Naive thymus-derived CD8-positive, alpha-beta T cell (primary cell): ENCODE measurements at regions of chr20 and their contacts with region 1.

Region 1: DNA sequence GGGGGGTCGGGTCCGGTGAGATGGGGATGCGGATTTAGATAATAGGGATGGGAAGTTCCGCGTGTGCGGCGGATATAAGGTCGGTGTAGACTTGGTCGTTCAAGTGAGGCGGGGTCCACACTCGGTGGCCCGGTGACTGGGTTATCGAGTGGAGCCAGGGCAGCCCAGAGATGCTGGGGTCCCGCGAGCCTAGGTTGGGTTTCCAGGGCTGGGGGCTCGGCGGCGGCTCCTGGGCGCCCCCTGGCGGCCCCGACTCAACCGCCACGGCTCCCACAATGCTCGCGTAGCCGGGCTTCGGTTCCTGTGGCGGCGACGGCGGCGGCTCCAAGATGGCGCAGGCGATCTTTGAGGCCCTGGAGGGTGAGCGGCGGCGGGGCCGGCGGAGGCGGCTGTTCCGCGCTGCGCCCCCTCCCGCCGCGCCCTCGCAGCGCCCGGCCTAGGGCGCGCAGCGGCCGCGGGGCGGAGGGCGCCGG is at the start of gene ZNF341:
- DNase-seq: peak; percentile 81 to 94 (median 88)
- ATAC-seq: peak; percentile 75 to 87
- H3K4me3 Mint-ChIP-seq: peak within 1 kb of the TSS; percentile 83 to 95 (median 90)
- H3K27ac Mint-ChIP-seq: peak within 1 kb of the TSS; percentile 84 to 98 (median 95)
- H3K4me1 Mint-ChIP-seq: peaks cover 18 to 28% (median 23%) of the 10 kb centered on the region in 4 donors
- H3K27me3 Mint-ChIP-seq: no peaks in the 10 kb centered on the region
- polyA plus RNA-seq, gene ZNF341: 0.75 to 3.8 (median 1.0) TPM

Region 2: GRCh38 chr20:33753763-33754162 is 22.0 kb after region 1 on chr20:
- POLR2A ChIA-PET with region 1: interaction called, 19 read pairs
- DNase-seq: no peak
- ATAC-seq: no peak
- H3K4me3 Mint-ChIP-seq: no peak overlapping the region
- H3K27ac Mint-ChIP-seq: peak overlapping the region in 1 of 10 donors; percentile 71
- H3K4me1 Mint-ChIP-seq: peaks cover 0 to 18% (median 9%) of the 10 kb centered on the region in 4 donors
- H3K27me3 Mint-ChIP-seq: no peaks in the 10 kb centered on the region